CD4-positive, alpha-beta memory T cell (primary cell): ENCODE measurements at regions of chr20 and their contacts with region 1.

Region 1: GRCh38 chr20:63657937-63658748 is at the start of gene RTEL1:
- DNase-seq: peak; percentile 86 to 93 (median 88)
- H3K4me3 ChIP-seq: peak within 1 kb of the TSS; percentile 91 to 97
- H3K4me3 Mint-ChIP-seq: peak within 1 kb of the TSS; percentile 92 to 98 (median 96)
- H3K27ac ChIP-seq: peak within 1 kb of the TSS; percentile 75
- H3K27ac Mint-ChIP-seq: peak within 1 kb of the TSS; percentile 94 to 98 (median 96)
- H3K4me1 ChIP-seq: peaks cover 42% of the 10 kb centered on the region
- H3K4me1 Mint-ChIP-seq: peaks cover 17 to 48% (median 24%) of the 10 kb centered on the region in 4 donors
- H3K27me3 ChIP-seq: no peaks in the 10 kb centered on the region
- H3K27me3 Mint-ChIP-seq: no peaks in the 10 kb centered on the region
- total RNA-seq, gene RTEL1: 30.9 to 36.0 TPM

Region 2: DNA sequence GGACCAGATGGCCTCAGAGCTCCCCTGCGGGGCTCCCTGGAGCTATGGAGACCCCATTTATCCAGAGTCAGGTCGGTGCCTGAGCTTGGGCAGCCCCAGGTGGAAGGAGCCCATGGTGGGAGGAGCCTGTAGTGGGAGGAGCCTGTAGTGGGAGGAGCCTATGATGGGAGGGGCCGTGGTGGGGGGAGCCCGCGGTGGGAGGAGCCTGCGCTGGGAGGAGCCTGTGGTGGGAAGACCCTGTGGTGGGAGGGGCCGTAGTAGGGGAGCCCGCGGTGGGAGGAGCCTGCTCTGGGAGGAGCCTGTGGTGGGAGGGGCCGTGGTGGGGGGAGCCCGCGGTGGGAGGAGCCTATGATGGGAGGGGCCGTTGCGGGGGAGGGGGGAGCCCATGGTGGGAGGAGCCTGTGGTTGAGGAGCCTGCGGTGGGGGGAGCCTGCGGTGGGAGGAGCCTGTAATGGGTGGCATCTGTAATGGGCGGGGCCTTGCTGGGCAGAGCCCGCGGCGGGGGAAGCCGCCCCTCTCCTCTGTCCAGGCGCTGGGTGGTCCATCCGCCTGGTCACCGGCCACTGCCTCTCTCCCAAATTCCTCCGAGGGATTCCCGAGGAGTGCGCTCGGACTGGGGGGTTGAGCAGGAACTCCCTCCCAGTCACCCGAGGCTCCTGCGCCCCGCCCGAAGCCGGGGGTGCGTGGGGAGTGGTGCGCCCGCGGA is 104.8 kb before region 1 on chr20:
- CTCF ChIA-PET with region 1: no interaction called
- POLR2A ChIA-PET with region 1: interaction called, 3 read pairs
- intact Hi-C with region 1: loop called (anchors 1 kb)
- DNase-seq: peak; percentile 87 to 93 (median 89)
- H3K4me3 ChIP-seq: peak overlapping the region; percentile 23 to 66
- H3K4me3 Mint-ChIP-seq: peak overlapping the region; percentile 68 to 92 (median 76)
- H3K27ac ChIP-seq: peak overlapping the region; percentile 69
- H3K27ac Mint-ChIP-seq: peak overlapping the region; percentile 93 to 98 (median 97)
- H3K4me1 ChIP-seq: peaks cover 22% of the 10 kb centered on the region
- H3K4me1 Mint-ChIP-seq: peaks cover 5 to 27% (median 14%) of the 10 kb centered on the region in 4 donors
- H3K27me3 ChIP-seq: no peaks in the 10 kb centered on the region
- H3K27me3 Mint-ChIP-seq: peaks cover 0 to 6% of the 10 kb centered on the region in 2 donors

Region 3: DNA sequence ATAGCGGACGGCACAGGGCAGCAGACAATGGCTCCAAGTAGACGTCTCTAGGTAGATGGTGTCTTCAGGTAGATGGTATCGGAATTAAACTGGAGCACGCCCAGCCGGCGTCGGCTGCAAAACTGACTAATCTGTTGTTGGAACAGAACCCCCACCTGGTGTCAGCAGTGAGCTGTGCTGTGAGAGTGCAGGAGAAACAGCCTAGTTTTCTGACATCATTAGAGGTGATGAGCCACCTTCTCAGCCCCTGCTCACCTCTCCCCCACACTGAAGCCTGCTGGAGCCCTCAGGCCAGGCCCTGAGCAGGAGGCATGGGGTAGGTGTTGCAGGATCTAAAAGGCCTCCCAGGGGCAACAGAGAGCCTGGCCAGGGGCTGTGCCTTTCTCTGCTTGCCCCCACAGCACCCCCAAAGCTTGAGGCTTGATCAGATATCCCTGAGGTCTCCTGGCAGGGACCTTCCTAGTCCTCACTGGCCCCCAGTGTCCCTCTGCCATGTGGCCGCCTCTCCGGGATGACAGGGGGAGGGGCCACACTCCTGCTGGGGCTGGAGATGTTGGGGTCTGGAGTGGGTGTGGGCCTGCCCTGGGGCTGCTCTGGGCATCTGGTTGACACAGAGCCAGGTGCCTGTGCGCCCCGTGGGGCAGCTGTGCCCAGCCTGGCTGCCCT is 77.2 kb before region 1 on chr20:
- CTCF ChIA-PET with region 1: no interaction called
- POLR2A ChIA-PET with region 1: interaction called, 4 read pairs
- intact Hi-C with region 1: loop called (anchors 1 kb)
- DNase-seq: peak; percentile 68 to 82 (median 78)
- H3K4me3 ChIP-seq: no peak overlapping the region
- H3K4me3 Mint-ChIP-seq: peak overlapping the region in 1 of 8 donors; percentile 43
- H3K27ac ChIP-seq: no peak overlapping the region
- H3K27ac Mint-ChIP-seq: peak overlapping the region in 2 of 7 donors; percentile 7 to 16
- H3K4me1 ChIP-seq: peaks cover 3% of the 10 kb centered on the region
- H3K4me1 Mint-ChIP-seq: peaks cover 1 to 13% (median 6%) of the 10 kb centered on the region in 4 donors
- H3K27me3 ChIP-seq: no peaks in the 10 kb centered on the region
- H3K27me3 Mint-ChIP-seq: no peaks in the 10 kb centered on the region

Region 4: GRCh38 chr20:63627129-63627750 is 30.9 kb before region 1 on chr20:
- CTCF ChIA-PET with region 1: no interaction called
- POLR2A ChIA-PET with region 1: interaction called, 35 read pairs
- intact Hi-C with region 1: loop called (anchors 1 kb)
- DNase-seq: peak; percentile 92 to 99 (median 96)
- H3K4me3 ChIP-seq: peak overlapping the region; percentile 91 to 95
- H3K4me3 Mint-ChIP-seq: peak overlapping the region; percentile 94 to 99 (median 96)
- H3K27ac ChIP-seq: peak overlapping the region; percentile 86
- H3K27ac Mint-ChIP-seq: peak overlapping the region; percentile 57 to 96 (median 90)
- H3K4me1 ChIP-seq: peaks cover 41% of the 10 kb centered on the region
- H3K4me1 Mint-ChIP-seq: peaks cover 19 to 54% (median 37%) of the 10 kb centered on the region in 4 donors
- H3K27me3 ChIP-seq: no peaks in the 10 kb centered on the region
- H3K27me3 Mint-ChIP-seq: no peaks in the 10 kb centered on the region

Region 5: DNA sequence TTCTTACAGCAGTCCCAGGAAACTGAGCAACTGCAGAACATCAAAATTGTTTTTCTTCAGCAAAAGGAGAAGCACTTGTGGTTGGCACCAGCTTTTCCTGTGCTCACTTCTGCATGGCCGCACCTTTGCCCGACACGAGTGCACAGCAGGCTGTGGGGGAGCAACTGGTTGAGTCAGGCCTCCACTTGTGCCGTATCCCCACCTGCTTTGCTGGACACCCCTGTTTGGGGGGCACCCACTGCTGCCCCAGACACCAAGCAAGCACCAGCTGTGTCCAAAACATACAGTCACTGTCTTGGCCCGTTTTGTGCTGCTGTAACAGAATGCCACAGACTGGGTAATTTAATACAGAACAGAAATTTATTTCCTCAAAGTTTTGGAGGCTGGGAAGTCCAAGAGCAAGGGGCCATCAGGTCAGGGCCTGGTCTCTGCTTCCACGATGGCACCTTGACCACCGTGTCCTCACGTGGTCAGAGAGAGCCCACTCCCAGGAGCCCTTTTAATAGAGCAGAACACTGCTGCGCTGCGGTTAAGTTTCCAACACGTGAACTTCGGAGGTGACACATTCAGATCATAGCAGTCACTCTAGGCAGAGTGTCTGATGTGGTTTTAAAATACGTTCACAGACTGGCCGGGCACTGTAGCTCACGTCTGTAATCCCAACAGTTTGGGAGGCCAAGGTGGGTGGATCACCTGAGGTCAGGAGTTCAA is 22.6 kb before region 1 on chr20:
- CTCF ChIA-PET with region 1: interaction called, 5 read pairs
- POLR2A ChIA-PET with region 1: interaction called, 60 read pairs
- intact Hi-C with region 1: no loop called
- DNase-seq: peak; percentile 87 to 95 (median 89)
- H3K4me3 ChIP-seq: peak overlapping the region in 1 of 2 donors; percentile 39
- H3K4me3 Mint-ChIP-seq: peak overlapping the region; percentile 80 to 93 (median 84)
- H3K27ac ChIP-seq: peak overlapping the region; percentile 72
- H3K27ac Mint-ChIP-seq: peak overlapping the region; percentile 98 to 100 (median 99)
- H3K4me1 ChIP-seq: peaks cover 79% of the 10 kb centered on the region
- H3K4me1 Mint-ChIP-seq: peaks cover 32 to 79% (median 55%) of the 10 kb centered on the region in 4 donors
- H3K27me3 ChIP-seq: no peaks in the 10 kb centered on the region
- H3K27me3 Mint-ChIP-seq: peaks cover 0 to 2% of the 10 kb centered on the region in 2 donors

Region 6: DNA sequence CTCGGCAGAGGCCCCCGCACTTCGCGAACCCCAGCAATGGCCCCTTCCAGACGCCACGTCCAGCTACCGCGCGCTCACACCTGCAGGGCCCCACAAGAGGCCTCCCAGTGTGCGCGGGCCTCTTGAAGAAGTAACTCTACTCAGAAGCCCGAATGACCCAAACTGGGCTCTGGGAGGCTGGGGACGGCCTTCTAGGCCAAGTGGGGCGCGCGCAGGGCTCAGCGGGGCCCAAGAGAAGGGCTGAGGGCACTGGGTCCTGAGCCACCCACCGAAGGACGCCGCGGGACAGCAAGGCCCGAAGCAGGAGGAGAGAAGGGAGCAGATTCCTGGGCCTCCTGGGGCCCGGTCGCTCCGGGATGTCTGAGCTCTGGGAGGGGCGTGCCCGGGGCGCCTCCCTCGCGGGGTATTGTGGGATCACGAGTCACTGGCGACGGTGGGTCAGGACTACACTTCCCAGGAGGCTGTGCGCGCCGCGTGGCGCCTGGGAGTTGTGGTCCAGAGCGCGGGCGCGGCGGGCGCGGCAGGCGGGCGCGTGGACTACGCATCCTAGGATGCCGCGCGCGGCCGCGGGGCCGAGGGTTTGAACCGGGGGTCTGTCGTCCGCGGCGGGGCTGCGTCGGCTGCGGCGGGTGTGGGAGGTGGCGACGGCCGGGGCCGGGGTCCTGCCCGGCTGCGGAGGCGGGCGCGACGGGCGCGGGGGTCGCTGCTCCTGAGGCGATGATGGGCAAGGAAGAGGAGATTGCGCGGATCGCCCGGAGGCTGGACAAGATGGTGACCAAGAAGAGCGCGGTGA is 404.6 kb after region 1 on chr20 and contains the start of gene TCEA2:
- CTCF ChIA-PET with region 1: no interaction called
- POLR2A ChIA-PET with region 1: no interaction called
- intact Hi-C with region 1: loop called (anchors 5 kb)
- DNase-seq: peak; percentile 90 to 91 (median 90)
- H3K4me3 ChIP-seq: peak within 1 kb of the TSS; percentile 42 to 57
- H3K4me3 Mint-ChIP-seq: peak within 1 kb of the TSS; percentile 80 to 93 (median 88)
- H3K27ac ChIP-seq: peak within 1 kb of the TSS; percentile 59
- H3K27ac Mint-ChIP-seq: peak within 1 kb of the TSS; percentile 50 to 92 (median 86)
- H3K4me1 ChIP-seq: peaks cover 57% of the 10 kb centered on the region
- H3K4me1 Mint-ChIP-seq: peaks cover 21 to 47% (median 35%) of the 10 kb centered on the region in 4 donors
- H3K27me3 ChIP-seq: no peaks in the 10 kb centered on the region
- H3K27me3 Mint-ChIP-seq: no peaks in the 10 kb centered on the region
- total RNA-seq, gene TCEA2: 43.3 to 45.9 TPM